ENCODE measurements at regions of chr6 and their contacts with region 1.

Region 1: DNA sequence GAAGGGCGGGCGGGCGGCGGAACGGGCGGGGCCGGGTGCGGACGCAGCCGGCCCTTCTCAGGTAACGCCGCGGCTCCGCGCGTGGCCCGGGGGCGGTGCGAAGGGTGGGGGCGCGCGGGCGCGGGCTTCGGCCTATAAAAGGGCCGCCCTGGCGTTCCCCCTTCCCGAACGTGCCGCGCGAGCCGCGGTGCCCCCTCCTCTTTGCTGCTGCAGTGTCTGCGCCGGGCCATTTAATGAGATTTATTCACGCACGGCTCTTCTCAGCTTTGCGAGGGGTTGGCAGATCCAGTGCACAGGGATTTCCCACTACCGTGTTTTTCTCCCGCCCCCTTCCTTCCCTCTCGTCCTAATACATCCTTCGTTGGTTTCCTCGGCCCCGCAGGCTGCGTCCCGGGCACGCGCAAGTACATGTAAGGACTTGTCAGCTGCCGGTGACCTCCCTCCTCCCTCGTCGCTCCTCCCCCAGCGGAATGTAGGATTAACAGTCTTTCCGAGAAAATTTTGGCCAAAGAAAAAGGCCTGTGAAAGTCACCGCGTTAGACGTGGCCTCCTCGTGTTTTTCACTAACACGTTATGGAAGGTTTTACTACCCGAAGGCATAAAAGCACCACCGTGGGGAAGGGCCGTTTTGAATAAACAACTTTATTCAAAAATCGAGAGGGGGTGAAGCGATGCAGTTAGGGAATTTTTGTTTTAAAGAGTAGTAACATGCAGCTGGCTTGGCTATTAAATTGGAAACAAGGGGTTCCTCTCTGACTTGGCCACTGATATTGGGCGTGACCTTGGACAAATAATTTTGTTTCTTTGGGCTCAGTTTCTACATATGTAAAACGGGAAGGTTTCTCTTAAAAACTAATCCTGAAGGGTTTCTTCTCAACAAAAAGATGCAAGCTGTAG is 966 bp upstream of the REV3L start:
- DNase-seq: peak in 9 of 14 experiments; percentile 51 to 95 (median 83)
- ATAC-seq: peak; percentile 55
- H3K4me3 ChIP-seq: peak overlapping the region; percentile 69
- H3K4me3 Mint-ChIP-seq: peak overlapping the region; percentile 99
- H3K27ac ChIP-seq: peak overlapping the region; percentile 97 to 98
- H3K27ac Mint-ChIP-seq: peak overlapping the region; percentile 98
- H3K4me1 ChIP-seq: peaks cover 30% of the 10 kb centered on the region
- H3K4me1 Mint-ChIP-seq: peaks cover 60% of the 10 kb centered on the region
- H3K27me3 ChIP-seq: no peaks in the 10 kb centered on the region
- H3K27me3 Mint-ChIP-seq: no peaks in the 10 kb centered on the region
- CTCF ChIP-seq: no peak

Region 2: GRCh38 chr6:110981202-110981600 is 502.8 kb before region 1 on chr6:
- CTCF ChIA-PET with region 1: no interaction called
- POLR2A ChIA-PET with region 1: no interaction called
- intact Hi-C with region 1: loop called in 1 of 2 experiments (anchors 5 kb)
- DNase-seq: peak in 1 of 14 experiments; percentile 43
- ATAC-seq: peak; percentile 1
- H3K4me3 ChIP-seq: peak overlapping the region; percentile 99
- H3K4me3 Mint-ChIP-seq: peak overlapping the region; percentile 99
- H3K27ac ChIP-seq: peak overlapping the region; percentile 77 to 97
- H3K27ac Mint-ChIP-seq: peak overlapping the region; percentile 99
- H3K4me1 ChIP-seq: peaks cover 14% of the 10 kb centered on the region
- H3K4me1 Mint-ChIP-seq: peaks cover 49% of the 10 kb centered on the region
- H3K27me3 ChIP-seq: no peaks in the 10 kb centered on the region
- H3K27me3 Mint-ChIP-seq: no peaks in the 10 kb centered on the region
- CTCF ChIP-seq: no peak

Region 3: GRCh38 chr6:111361648-111362047 is 122.3 kb before region 1 on chr6:
- CTCF ChIA-PET with region 1: interaction called, 12 read pairs
- POLR2A ChIA-PET with region 1: no interaction called
- intact Hi-C with region 1: loop called (anchors 5 kb)
- DNase-seq: peak in 3 of 14 experiments; percentile 20 to 32 (median 21)
- ATAC-seq: no peak
- H3K4me3 ChIP-seq: no peak overlapping the region
- H3K4me3 Mint-ChIP-seq: no peak overlapping the region
- H3K27ac ChIP-seq: no peak overlapping the region
- H3K27ac Mint-ChIP-seq: no peak overlapping the region
- H3K4me1 ChIP-seq: no peaks in the 10 kb centered on the region
- H3K4me1 Mint-ChIP-seq: no peaks in the 10 kb centered on the region
- H3K27me3 ChIP-seq: no peaks in the 10 kb centered on the region
- H3K27me3 Mint-ChIP-seq: no peaks in the 10 kb centered on the region
- CTCF ChIP-seq: peak; percentile 23

Region 4: GRCh38 chr6:111565326-111566221 is 81.6 kb after region 1 on chr6:
- CTCF ChIA-PET with region 1: no interaction called
- POLR2A ChIA-PET with region 1: interaction called, 3 read pairs
- intact Hi-C with region 1: loop called in 1 of 2 experiments (anchors 5 kb)
- DNase-seq: peak in 2 of 14 experiments; percentile 39 to 47
- ATAC-seq: peak; percentile 65
- H3K4me3 ChIP-seq: no peak overlapping the region
- H3K4me3 Mint-ChIP-seq: no peak overlapping the region
- H3K27ac ChIP-seq: no peak overlapping the region
- H3K27ac Mint-ChIP-seq: peak overlapping the region; percentile 65
- H3K4me1 ChIP-seq: peaks cover 24% of the 10 kb centered on the region
- H3K4me1 Mint-ChIP-seq: peaks cover 55% of the 10 kb centered on the region
- H3K27me3 ChIP-seq: no peaks in the 10 kb centered on the region
- H3K27me3 Mint-ChIP-seq: no peaks in the 10 kb centered on the region
- CTCF ChIP-seq: no peak

Region 5: DNA sequence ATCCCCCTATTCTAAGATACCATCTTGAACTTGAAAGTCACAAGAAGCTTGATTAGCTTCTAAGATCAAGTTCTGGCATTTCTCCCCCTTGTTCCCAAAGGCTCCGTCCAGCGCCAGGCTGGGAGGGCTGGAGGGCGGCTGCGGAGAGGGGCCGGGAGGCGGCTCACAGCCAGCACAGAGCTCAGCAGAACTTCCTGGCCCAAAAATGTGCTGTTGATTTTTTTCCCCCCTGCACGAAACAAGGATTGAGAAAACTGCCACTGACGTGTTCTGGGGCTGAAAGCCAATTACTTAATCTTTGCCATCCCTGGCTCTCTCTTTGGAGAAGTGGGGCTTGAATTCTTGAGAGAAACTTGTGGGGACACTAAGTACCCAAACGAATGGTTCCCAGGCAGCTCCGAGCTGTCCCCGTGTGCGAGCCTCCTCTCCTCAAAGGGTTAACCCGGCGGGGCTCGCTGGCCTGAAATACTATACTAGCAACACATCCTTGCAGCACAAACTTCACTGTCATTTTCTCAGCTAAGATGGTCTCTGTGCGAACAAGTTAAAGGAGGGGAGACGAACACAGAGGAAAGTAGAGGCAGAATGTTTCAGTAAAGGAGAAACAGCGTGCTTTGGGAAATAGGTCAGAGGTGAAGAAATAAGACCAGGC is 121.2 kb after region 1 on chr6:
- CTCF ChIA-PET with region 1: interaction called, 3 read pairs
- POLR2A ChIA-PET with region 1: interaction called, 40 read pairs
- intact Hi-C with region 1: no loop called
- DNase-seq: peak in 9 of 14 experiments; percentile 8 to 55 (median 13)
- ATAC-seq: peak; percentile 60
- H3K4me3 ChIP-seq: peak overlapping the region; percentile 65
- H3K4me3 Mint-ChIP-seq: peak overlapping the region; percentile 95
- H3K27ac ChIP-seq: peak overlapping the region; percentile 66
- H3K27ac Mint-ChIP-seq: peak overlapping the region; percentile 92
- H3K4me1 ChIP-seq: peaks cover 38% of the 10 kb centered on the region
- H3K4me1 Mint-ChIP-seq: peaks cover 61% of the 10 kb centered on the region
- H3K27me3 ChIP-seq: no peaks in the 10 kb centered on the region
- H3K27me3 Mint-ChIP-seq: no peaks in the 10 kb centered on the region
- CTCF ChIP-seq: no peak

Region 6: DNA sequence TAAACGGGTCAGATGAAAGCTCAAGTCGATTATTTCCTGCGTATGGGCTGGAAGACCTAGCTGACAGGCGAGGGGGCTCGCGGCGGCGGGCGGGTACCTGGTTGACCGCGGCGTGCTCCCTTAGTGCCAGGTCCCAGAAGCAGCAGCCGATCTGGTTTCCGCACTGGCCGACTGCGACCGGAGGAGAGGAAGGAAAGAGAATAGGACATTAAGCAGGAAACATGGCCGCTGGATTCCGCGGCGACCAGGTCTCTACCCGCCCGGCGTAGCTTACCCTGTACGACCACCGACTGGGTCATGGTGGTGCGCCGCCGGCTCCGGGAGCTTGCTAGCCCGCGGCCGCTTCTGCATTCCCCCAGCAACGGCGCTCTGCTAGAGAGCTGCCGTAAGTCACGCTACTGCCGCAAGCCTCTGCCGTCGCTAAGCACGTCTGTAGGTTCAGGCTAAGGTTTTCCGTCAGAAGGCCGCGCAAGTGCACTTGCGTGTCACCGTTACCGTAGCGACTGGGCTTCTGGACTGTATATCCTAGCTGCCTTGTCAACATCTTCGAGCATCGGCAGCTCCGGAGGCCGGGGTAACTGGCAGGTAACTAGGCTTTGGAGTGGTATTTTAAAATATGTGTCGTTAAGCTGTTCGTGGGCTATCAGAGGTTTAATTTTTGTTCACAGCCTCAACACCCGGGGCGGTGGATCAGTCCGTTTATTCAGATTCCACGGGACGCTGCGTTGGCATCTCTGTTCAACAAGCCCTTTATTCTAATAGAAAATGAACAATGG is 603.3 kb after region 1 on chr6 and contains the starts of genes FAM229B and TUBE1:
- CTCF ChIA-PET with region 1: interaction called, 3 read pairs
- POLR2A ChIA-PET with region 1: interaction called, 8 read pairs
- intact Hi-C with region 1: loop called in 1 of 2 experiments (anchors 5 kb)
- DNase-seq: peak; percentile 81 to 98 (median 84)
- ATAC-seq: peak; percentile 97
- H3K4me3 ChIP-seq: peak within 1 kb of the TSS; percentile 88
- H3K4me3 Mint-ChIP-seq: no peak within 1 kb of the TSS
- H3K27ac ChIP-seq: peak within 1 kb of the TSS; percentile 60 to 84
- H3K27ac Mint-ChIP-seq: no peak within 1 kb of the TSS
- H3K4me1 ChIP-seq: peaks cover 3% of the 10 kb centered on the region
- H3K4me1 Mint-ChIP-seq: peaks cover 11% of the 10 kb centered on the region
- H3K27me3 ChIP-seq: peaks cover 0 to 6% of the 10 kb centered on the region in 2 experiments
- H3K27me3 Mint-ChIP-seq: peaks cover 28% of the 10 kb centered on the region
- CTCF ChIP-seq: no peak
- total RNA-seq, gene FAM229B: 3.6 to 4.4 TPM
- total RNA-seq, gene TUBE1: 28.2 to 30.8 TPM